HCT116 (cell line): ENCODE measurements at regions of chr4 and their contacts with region 1.

Region 1: DNA sequence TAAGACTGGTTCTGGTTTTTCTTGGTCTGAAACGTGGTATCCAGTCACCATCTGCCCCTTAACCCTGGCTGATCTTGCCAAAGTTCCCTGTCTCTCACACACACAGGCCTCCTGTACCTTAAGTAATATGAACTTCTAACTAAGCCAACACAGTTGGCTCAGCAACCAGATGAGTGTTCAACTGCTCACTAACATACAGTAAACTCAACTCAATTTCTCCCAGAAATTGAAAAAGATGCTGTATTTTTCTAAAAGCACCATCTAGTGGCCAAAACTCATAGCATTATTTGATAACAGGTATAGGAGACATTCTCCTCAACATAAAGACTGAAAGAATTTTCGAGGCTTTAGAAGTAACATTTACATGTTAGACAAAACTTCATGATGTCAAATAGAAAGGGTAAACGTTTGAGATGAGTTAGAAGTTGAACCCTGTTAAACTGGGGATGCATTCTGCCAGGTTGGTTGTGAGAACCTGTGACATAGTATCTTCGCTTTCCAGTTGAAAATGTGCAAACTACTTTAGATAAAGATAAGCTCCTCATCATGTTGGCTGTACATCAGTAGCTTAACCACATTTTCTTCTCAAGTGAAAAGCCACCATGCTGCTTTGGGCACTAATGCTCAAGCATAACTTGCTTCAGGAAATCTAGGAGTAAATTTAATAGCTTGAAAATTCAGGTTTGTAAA is 31.2 kb downstream of the CCNI start:
- DNase-seq: no peak
- ATAC-seq: peak; percentile 63
- H3K4me3 ChIP-seq: no peak overlapping the region
- H3K27ac ChIP-seq: no peak overlapping the region
- H3K4me1 ChIP-seq: no peaks in the 10 kb centered on the region
- H3K27me3 ChIP-seq: no peaks in the 10 kb centered on the region
- CTCF ChIP-seq: peak; percentile 48 to 80 (median 63); a peak in 5 of 6 replicates
- POLR2A ChIP-seq: no peak
- RAD21 ChIP-seq: peak; percentile 62

Region 2: GRCh38 chr4:77308843-77309242 is 264.2 kb after region 1 on chr4:
- CTCF ChIA-PET with region 1: no interaction called
- POLR2A ChIA-PET with region 1: no interaction called
- RAD21 ChIA-PET with region 1: no interaction called
- intact Hi-C with region 1: loop called (anchors 5 kb)
- DNase-seq: peak; percentile 10
- ATAC-seq: peak; percentile 97
- H3K4me3 ChIP-seq: no peak overlapping the region
- H3K27ac ChIP-seq: no peak overlapping the region
- H3K4me1 ChIP-seq: no peaks in the 10 kb centered on the region
- H3K27me3 ChIP-seq: peaks cover 23% of the 10 kb centered on the region
- CTCF ChIP-seq: peak; percentile 53 to 62 (median 56); a peak in 4 of 6 replicates
- POLR2A ChIP-seq: no peak
- RAD21 ChIP-seq: peak; percentile 74